Natural killer cell (primary cell): ENCODE measurements at regions of chr3 and their contacts with region 1.

Region 1: DNA sequence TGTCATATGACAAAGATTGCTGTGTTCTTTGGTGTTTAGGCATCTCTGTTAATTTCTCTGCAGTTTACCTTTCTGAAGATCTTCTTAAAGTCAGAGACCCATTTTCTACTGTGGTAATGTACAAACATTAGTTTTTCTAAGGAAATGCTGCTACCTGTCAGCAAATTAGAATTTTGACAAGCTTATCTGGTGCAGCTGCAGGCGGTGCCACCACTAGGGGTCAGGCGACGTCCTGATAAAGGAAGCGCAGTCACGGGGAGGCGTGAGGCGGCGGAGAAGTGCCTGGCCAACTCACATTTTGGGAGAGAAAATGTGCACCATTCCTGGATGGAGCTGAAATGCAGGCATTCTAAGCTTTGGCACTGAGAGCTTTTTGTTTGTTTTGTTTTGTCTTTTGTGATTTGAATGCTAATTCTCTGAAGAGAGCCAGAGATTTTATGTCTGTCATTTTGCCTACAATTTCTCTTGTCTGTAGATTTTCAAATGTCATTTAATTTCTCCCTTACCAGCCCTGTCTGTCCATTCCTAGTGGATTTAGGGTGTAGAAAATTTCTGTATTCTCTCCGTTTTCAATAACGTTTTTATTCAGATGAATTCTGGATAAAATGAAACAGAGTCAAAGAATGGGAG is 24.9 kb upstream of the SIAH2 start:
- DNase-seq: peak; percentile 70 to 85
- ATAC-seq: peak; percentile 93 to 98 (median 95)
- H3K4me3 ChIP-seq: no peak overlapping the region
- H3K4me3 Mint-ChIP-seq: no peak overlapping the region
- H3K27ac ChIP-seq: no peak overlapping the region
- H3K27ac Mint-ChIP-seq: no peak overlapping the region
- H3K4me1 ChIP-seq: no peaks in the 10 kb centered on the region
- H3K4me1 Mint-ChIP-seq: peaks cover 5% of the 10 kb centered on the region in 2 donors
- H3K27me3 ChIP-seq: no peaks in the 10 kb centered on the region
- H3K27me3 Mint-ChIP-seq: peaks cover 14 to 27% of the 10 kb centered on the region in 2 donors
- CTCF ChIP-seq: peak; percentile 87

Region 2: GRCh38 chr3:150603153-150603979 is 184.5 kb before region 1 on chr3 and contains the start of gene SELENOT:
- intact Hi-C with region 1: no loop called
- DNase-seq: peak; percentile 95 to 99
- ATAC-seq: peak; percentile 76 to 94 (median 82)
- H3K4me3 ChIP-seq: peak within 1 kb of the TSS; percentile 85
- H3K4me3 Mint-ChIP-seq: peak within 1 kb of the TSS; percentile 98
- H3K27ac ChIP-seq: peak within 1 kb of the TSS; percentile 97
- H3K27ac Mint-ChIP-seq: peak within 1 kb of the TSS; percentile 98 to 99
- H3K4me1 ChIP-seq: peaks cover 34% of the 10 kb centered on the region
- H3K4me1 Mint-ChIP-seq: peaks cover 59 to 62% of the 10 kb centered on the region in 2 donors
- H3K27me3 ChIP-seq: no peaks in the 10 kb centered on the region
- H3K27me3 Mint-ChIP-seq: no peaks in the 10 kb centered on the region
- CTCF ChIP-seq: no peak
- total RNA-seq, gene SELENOT: 121 to 142 (median 133) TPM

Region 3: GRCh38 chr3:150721285-150722130 is 66.3 kb before region 1 on chr3:
- intact Hi-C with region 1: loop called (anchors 1 kb)
- DNase-seq: peak in 1 of 2 donors; percentile 84
- ATAC-seq: peak; percentile 87 to 96 (median 94)
- H3K4me3 ChIP-seq: no peak overlapping the region
- H3K4me3 Mint-ChIP-seq: no peak overlapping the region
- H3K27ac ChIP-seq: no peak overlapping the region
- H3K27ac Mint-ChIP-seq: no peak overlapping the region
- H3K4me1 ChIP-seq: peaks cover 3% of the 10 kb centered on the region
- H3K4me1 Mint-ChIP-seq: peaks cover 6 to 10% of the 10 kb centered on the region in 2 donors
- H3K27me3 ChIP-seq: no peaks in the 10 kb centered on the region
- H3K27me3 Mint-ChIP-seq: no peaks in the 10 kb centered on the region
- CTCF ChIP-seq: peak; percentile 84

Region 4: DNA sequence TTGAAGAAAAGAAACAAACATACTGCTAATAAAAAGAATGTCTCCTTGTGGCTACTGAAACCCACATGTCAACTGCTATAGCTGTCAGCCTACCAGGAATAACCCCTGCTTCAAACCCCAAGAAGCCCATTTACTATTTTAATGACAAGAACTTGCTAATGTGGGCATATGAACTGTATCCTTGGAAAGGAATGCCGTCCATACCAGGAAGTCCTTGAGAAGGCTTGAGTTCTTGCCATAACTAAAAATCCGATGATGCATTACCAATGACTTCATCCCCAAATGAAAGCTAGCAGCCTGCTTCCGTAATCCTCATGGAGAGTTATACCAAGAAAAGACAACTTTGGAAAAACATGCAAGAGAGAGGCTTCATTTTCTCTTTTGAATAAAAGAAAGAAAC is 82.5 kb after region 1 on chr3:
- intact Hi-C with region 1: loop called (anchors 2 kb)
- DNase-seq: no peak
- ATAC-seq: no peak
- H3K4me3 ChIP-seq: no peak overlapping the region
- H3K4me3 Mint-ChIP-seq: no peak overlapping the region
- H3K27ac ChIP-seq: no peak overlapping the region
- H3K27ac Mint-ChIP-seq: no peak overlapping the region
- H3K4me1 ChIP-seq: no peaks in the 10 kb centered on the region
- H3K4me1 Mint-ChIP-seq: peaks cover 0 to 2% of the 10 kb centered on the region in 2 donors
- H3K27me3 ChIP-seq: no peaks in the 10 kb centered on the region
- H3K27me3 Mint-ChIP-seq: peaks cover 9 to 15% of the 10 kb centered on the region in 2 donors
- CTCF ChIP-seq: no peak

Region 5: GRCh38 chr3:151146071-151146730 is 358.3 kb after region 1 on chr3:
- intact Hi-C with region 1: loop called (anchors 2 kb)
- DNase-seq: peak; percentile 26 to 78
- ATAC-seq: peak; percentile 78 to 88 (median 82)
- H3K4me3 ChIP-seq: no peak overlapping the region
- H3K4me3 Mint-ChIP-seq: no peak overlapping the region
- H3K27ac ChIP-seq: no peak overlapping the region
- H3K27ac Mint-ChIP-seq: peak overlapping the region in 1 of 2 donors; percentile 60
- H3K4me1 ChIP-seq: peaks cover 12% of the 10 kb centered on the region
- H3K4me1 Mint-ChIP-seq: no peaks in the 10 kb centered on the region
- H3K27me3 ChIP-seq: no peaks in the 10 kb centered on the region
- H3K27me3 Mint-ChIP-seq: peaks cover 0 to 5% of the 10 kb centered on the region in 2 donors
- CTCF ChIP-seq: peak; percentile 80

Region 6: GRCh38 chr3:151282921-151283320 is 495.1 kb after region 1 on chr3:
- intact Hi-C with region 1: loop called (anchors 2 kb)
- DNase-seq: peak in 1 of 2 donors; percentile 81
- ATAC-seq: peak; percentile 71 to 82 (median 77)
- H3K4me3 ChIP-seq: no peak overlapping the region
- H3K4me3 Mint-ChIP-seq: no peak overlapping the region
- H3K27ac ChIP-seq: no peak overlapping the region
- H3K27ac Mint-ChIP-seq: no peak overlapping the region
- H3K4me1 ChIP-seq: peaks cover 3% of the 10 kb centered on the region
- H3K4me1 Mint-ChIP-seq: peaks cover 8 to 11% of the 10 kb centered on the region in 2 donors
- H3K27me3 ChIP-seq: no peaks in the 10 kb centered on the region
- H3K27me3 Mint-ChIP-seq: peaks cover 0 to 2% of the 10 kb centered on the region in 2 donors
- CTCF ChIP-seq: peak; percentile 80

Region 7: GRCh38 chr3:151520105-151520504 is 732.2 kb after region 1 on chr3:
- intact Hi-C with region 1: no loop called
- DNase-seq: no peak
- ATAC-seq: no peak
- H3K4me3 ChIP-seq: no peak overlapping the region
- H3K4me3 Mint-ChIP-seq: no peak overlapping the region
- H3K27ac ChIP-seq: no peak overlapping the region
- H3K27ac Mint-ChIP-seq: no peak overlapping the region
- H3K4me1 ChIP-seq: no peaks in the 10 kb centered on the region
- H3K4me1 Mint-ChIP-seq: no peaks in the 10 kb centered on the region
- H3K27me3 ChIP-seq: no peaks in the 10 kb centered on the region
- H3K27me3 Mint-ChIP-seq: peaks cover 9 to 13% of the 10 kb centered on the region in 2 donors
- CTCF ChIP-seq: no peak